Activated CD4-positive, alpha-beta memory T cell treated with anti-CD3 and anti-CD28 coated beads, Interleukin-2, amount 10 ng/mL, durations not matched to agents 7 days and 5 days (primary cell): ENCODE measurements at regions of chr16 and their contacts with region 1.

Region 1: DNA sequence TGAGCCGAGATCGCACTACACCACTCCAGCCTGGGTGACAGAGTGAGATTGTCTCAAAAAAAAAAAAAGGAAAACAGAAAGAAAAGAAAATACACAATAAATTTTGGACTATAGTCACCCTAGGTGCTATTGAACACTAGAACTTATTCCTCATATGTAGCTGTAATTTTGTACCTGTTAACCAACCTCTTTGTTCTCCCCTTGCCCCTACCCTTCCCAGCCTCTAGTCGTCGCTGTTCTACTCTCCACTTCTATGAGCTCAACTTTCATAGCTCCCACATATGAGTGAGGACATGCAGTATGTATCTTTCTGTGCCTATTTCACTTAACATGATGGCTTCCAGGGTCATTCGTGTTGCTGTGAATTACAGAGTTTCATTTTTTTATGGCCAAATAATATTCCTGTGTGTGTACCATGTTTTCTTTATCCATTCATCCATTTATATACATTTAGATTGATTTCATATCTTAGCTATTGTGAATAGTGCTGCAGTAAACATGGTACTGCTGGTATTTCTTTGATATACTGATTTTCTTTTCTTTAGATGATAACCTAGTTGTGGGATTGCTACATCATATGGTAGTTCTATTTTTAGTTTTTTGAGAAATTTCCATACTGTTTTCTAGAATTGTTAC is 28.3 kb downstream of the VPS35L start:
- DNase-seq: peak; percentile 25
- H3K4me3 Mint-ChIP-seq: no peak overlapping the region
- H3K27ac Mint-ChIP-seq: no peak overlapping the region
- H3K4me1 Mint-ChIP-seq: peaks cover 2% of the 10 kb centered on the region
- H3K27me3 Mint-ChIP-seq: no peaks in the 10 kb centered on the region

Region 2: GRCh38 chr16:19532601-19533000 is 51.2 kb before region 1 on chr16:
- CTCF ChIA-PET with region 1: no interaction called
- POLR2A ChIA-PET with region 1: no interaction called
- DNase-seq: no peak
- H3K4me3 Mint-ChIP-seq: no peak overlapping the region
- H3K27ac Mint-ChIP-seq: no peak overlapping the region
- H3K4me1 Mint-ChIP-seq: peaks cover 8% of the 10 kb centered on the region
- H3K27me3 Mint-ChIP-seq: no peaks in the 10 kb centered on the region

Region 3: DNA sequence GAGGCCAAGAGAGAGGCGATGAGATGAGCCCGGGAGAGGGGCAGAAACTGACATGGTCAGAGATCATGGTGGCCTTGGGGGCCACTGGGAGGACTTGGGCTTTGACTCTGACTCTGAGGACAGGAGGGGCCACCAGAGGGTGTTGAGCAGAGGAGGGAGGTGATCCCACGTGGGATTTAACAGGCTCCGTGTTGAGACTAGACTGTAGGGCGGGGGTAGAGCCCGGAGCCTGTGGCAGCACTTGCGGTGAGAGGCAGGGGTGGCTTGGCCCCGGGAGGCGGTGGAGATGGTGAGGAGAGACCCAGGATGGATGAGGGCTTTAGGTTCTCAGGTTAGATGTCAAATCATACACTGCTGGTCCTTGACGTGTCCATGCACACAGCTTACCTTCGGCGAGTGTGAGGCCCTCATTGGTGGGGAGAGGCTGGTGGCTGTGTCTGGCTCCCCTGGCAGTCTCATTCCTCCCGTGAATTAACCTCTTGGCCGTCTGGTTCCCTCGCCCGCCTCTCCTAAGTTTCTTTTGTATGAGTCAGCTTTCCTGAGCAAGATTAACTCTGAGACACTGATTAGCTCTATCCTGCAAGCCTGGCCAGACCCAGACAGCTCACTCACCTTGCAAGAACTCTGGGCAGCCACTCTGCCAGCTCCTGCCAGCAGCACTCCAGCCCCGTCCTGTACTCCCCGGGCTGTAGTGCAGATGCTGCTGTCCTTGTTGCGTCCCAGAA is 11.4 kb after region 1 on chr16:
- CTCF ChIA-PET with region 1: interaction called, 16 read pairs
- POLR2A ChIA-PET with region 1: no interaction called
- DNase-seq: no peak
- H3K4me3 Mint-ChIP-seq: no peak overlapping the region
- H3K27ac Mint-ChIP-seq: no peak overlapping the region
- H3K4me1 Mint-ChIP-seq: no peaks in the 10 kb centered on the region
- H3K27me3 Mint-ChIP-seq: no peaks in the 10 kb centered on the region

Region 4: DNA sequence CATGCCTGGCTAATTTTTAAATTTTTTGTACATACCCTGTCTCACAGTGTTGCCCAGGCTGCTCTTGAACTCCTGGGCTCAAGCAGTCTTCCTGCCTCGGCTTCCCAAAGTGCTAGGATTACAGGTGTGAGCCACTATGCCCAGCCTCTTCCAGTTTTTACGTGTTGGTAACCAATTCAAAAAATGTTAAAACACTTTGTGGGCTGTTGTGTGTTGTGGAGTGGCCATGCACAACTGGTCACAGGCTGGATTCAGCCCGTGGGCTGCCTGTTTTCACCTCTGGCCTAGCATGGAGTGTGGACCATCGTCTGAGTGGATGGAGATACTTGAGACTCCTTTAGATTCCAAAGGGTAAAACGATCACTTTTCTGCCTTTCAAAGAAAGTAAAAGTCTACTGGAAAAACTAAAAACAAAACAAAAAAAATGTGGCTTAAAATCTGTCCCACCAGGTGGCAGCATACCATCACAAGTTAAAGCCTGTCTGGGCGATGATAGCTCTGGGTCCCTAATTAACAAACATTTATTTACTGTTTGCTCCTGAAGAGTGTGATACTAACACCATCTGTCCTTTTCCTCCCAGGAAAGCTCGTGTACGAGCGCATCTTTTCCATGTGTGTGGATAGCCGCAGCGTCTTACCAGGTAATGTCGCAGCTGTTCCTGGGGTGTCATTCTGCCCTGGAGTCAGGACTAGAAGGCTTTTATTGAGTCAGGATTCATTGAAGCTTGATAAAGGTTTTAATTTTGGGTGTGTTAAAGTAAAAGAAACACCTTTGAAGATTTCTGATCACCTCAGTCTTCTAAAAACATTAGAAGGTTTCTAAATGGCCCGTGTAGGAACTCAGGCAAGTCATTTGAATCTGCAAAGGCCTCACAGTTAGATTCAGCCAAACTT is 17.5 kb after region 1 on chr16:
- CTCF ChIA-PET with region 1: interaction called, 16 read pairs
- POLR2A ChIA-PET with region 1: no interaction called
- DNase-seq: peak; percentile 39
- H3K4me3 Mint-ChIP-seq: no peak overlapping the region
- H3K27ac Mint-ChIP-seq: peak overlapping the region; percentile 21
- H3K4me1 Mint-ChIP-seq: peaks cover 2% of the 10 kb centered on the region
- H3K27me3 Mint-ChIP-seq: no peaks in the 10 kb centered on the region

Region 5: DNA sequence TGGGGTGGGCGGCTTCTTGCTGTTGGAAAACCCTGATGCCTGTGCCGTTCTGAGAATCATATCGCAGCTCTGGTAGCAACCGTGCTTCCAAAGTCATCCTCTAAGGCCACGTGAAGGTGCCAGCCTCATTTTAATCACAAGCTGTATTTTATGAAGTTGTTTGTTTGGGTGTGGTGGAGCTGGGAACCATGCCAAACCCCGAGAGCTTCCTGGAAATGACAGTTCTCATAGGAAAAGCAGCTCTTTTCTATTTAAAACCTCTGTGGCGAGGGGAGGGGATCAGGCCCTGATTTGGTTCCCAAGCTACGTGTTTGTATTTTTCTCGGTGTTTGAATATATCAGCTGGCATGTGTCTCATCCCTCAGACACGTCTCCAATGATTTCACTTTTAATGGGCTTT is 112.5 kb after region 1 on chr16:
- CTCF ChIA-PET with region 1: no interaction called
- POLR2A ChIA-PET with region 1: no interaction called
- DNase-seq: peak; percentile 67
- H3K4me3 Mint-ChIP-seq: peak overlapping the region; percentile 2
- H3K27ac Mint-ChIP-seq: peak overlapping the region; percentile 62
- H3K4me1 Mint-ChIP-seq: peaks cover 41% of the 10 kb centered on the region
- H3K27me3 Mint-ChIP-seq: no peaks in the 10 kb centered on the region

Region 6: GRCh38 chr16:19886073-19886941 is 302.5 kb after region 1 on chr16:
- CTCF ChIA-PET with region 1: interaction called, 16 read pairs
- POLR2A ChIA-PET with region 1: no interaction called
- DNase-seq: peak; percentile 83
- H3K4me3 Mint-ChIP-seq: peak overlapping the region; percentile 70
- H3K27ac Mint-ChIP-seq: no peak overlapping the region
- H3K4me1 Mint-ChIP-seq: peaks cover 17% of the 10 kb centered on the region
- H3K27me3 Mint-ChIP-seq: peaks cover 31% of the 10 kb centered on the region